H1 (cell line): ENCODE measurements at regions of chr11 and their contacts with region 1.

Region 1: DNA sequence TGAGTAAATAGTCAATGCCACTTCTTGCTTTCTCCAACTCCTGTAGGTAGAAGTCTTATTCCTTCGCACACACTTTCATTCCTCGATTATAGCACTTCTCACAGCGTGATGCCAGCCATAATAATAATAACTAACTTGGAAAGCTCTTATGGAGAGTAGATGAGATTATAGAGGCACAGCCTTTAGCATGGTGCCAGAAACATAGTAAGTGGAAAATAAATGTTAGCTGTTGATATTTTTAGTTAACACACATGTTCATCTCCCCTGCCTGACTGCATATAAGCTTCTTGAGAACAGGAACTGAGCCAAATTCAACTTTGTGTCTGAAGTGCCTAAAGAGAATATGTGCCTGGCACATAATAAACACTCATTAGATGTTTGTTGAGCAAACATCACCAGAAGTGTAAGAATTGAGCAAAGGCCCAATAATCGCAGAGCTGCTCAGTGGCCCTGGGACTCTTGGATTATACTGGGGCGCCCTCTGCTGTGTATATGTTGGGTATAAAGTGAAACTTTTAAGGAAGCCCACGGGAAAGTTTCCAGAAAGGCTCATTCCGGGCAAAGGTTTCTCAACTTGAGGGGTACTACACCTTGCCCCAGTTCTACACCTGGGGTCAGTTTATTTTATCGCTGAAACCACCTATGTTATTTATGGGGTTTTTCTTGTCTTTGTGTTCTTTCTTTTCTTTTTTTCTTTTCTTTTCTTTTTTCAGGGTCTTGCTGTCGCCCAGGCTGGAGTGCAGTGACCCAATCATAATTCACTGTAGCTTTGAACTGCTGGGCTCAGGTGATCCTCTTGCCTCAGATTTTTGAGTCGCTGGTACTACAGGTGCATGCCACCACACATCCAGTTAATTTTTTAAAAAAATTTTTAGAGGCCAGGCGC is 22.3 kb downstream of the SLN start:
- DNase-seq: peak in 1 of 2 experiments; percentile 78
- H3K4me3 ChIP-seq: no peak overlapping the region
- H3K27ac ChIP-seq: no peak overlapping the region
- H3K4me1 ChIP-seq: no peaks in the 10 kb centered on the region
- H3K27me3 ChIP-seq: no peaks in the 10 kb centered on the region
- CTCF ChIP-seq: peak; percentile 17 to 94 (median 67)
- EP300 ChIP-seq: no peak
- POLR2A ChIP-seq: no peak
- RAD21 ChIP-seq: peak; percentile 96 to 99

Region 2: GRCh38 chr11:107565219-107565937 is 124.2 kb before region 1 on chr11 and contains the start of gene ALKBH8:
- CTCF ChIA-PET with region 1: interaction called, 398 read pairs
- POLR2A ChIA-PET with region 1: interaction called, 4 read pairs
- DNase-seq: peak in 1 of 2 experiments; percentile 81
- H3K4me3 ChIP-seq: peak within 1 kb of the TSS; percentile 88 to 99 (median 94)
- H3K27ac ChIP-seq: peak within 1 kb of the TSS; percentile 82
- H3K4me1 ChIP-seq: peaks cover 0 to 6% (median 1%) of the 10 kb centered on the region in 4 experiments; a peak in 3 of 7 replicates
- H3K27me3 ChIP-seq: no peaks in the 10 kb centered on the region
- CTCF ChIP-seq: no peak
- EP300 ChIP-seq: no peak
- POLR2A ChIP-seq: peak in 1 of 2 experiments; percentile 84; a peak in 2 of 3 replicates
- RAD21 ChIP-seq: no peak
- total RNA-seq, gene ALKBH8: 11.9 and 13.0 TPM in 2 replicates

Region 3: GRCh38 chr11:107606141-107606540 is 83.4 kb before region 1 on chr11:
- CTCF ChIA-PET with region 1: interaction called, 57 read pairs
- POLR2A ChIA-PET with region 1: no interaction called
- DNase-seq: no peak
- H3K4me3 ChIP-seq: no peak overlapping the region
- H3K27ac ChIP-seq: no peak overlapping the region
- H3K4me1 ChIP-seq: peaks cover 0 to 3% (median 0%) of the 10 kb centered on the region in 4 experiments; a peak in 2 of 7 replicates
- H3K27me3 ChIP-seq: peaks cover 0 to 5% (median under 1%) of the 10 kb centered on the region in 4 experiments; a peak in 2 of 7 replicates
- CTCF ChIP-seq: peak; percentile 29 to 55 (median 42); a peak in 3 of 4 replicates
- EP300 ChIP-seq: no peak
- POLR2A ChIP-seq: no peak
- RAD21 ChIP-seq: peak; percentile 5 to 11; a peak in 1 of 4 replicates

Region 4: DNA sequence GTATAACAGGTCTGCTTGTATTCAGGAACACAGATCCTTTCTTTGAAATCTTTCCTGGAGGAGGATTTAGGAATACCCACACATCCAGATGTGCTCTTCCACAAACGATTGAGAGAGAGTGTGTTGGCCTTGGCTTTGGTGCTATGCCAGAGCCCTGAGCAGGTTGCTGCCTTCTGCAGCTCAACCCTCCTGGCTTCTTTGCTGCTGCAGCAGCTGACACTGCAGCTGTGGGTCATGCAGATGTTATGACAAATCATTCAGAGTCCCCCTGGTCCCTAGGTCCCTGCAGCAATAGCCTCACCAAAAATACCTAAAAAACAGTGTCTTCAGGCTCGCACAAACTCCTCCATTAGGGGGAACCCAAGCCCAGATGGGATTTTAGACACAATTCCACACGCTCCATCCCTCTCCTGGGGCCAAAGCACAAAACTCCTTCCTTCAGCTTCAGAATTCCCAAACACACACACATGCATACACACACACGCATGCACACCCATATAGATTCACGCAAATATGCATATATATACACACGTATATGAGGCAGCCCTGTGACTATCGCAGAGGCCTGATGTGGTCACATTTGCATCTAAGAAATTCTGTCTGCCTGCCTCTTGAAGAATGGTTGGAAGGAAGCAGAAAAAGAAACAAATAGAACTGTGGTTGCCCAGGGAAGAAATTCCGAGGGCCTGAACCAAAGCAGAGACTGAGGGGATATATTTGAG is 13.1 kb before region 1 on chr11:
- CTCF ChIA-PET with region 1: interaction called, 149 read pairs
- POLR2A ChIA-PET with region 1: no interaction called
- DNase-seq: no peak
- H3K4me3 ChIP-seq: no peak overlapping the region
- H3K27ac ChIP-seq: no peak overlapping the region
- H3K4me1 ChIP-seq: no peaks in the 10 kb centered on the region
- H3K27me3 ChIP-seq: no peaks in the 10 kb centered on the region
- CTCF ChIP-seq: no peak
- EP300 ChIP-seq: no peak
- POLR2A ChIP-seq: no peak
- RAD21 ChIP-seq: no peak

Region 5: GRCh38 chr11:107713009-107713408 is 23.4 kb after region 1 on chr11:
- CTCF ChIA-PET with region 1: no interaction called
- POLR2A ChIA-PET with region 1: no interaction called
- DNase-seq: no peak
- H3K4me3 ChIP-seq: no peak overlapping the region
- H3K27ac ChIP-seq: no peak overlapping the region
- H3K4me1 ChIP-seq: peaks cover 0 to 3% (median 0%) of the 10 kb centered on the region in 4 experiments; a peak in 1 of 7 replicates
- H3K27me3 ChIP-seq: no peaks in the 10 kb centered on the region
- CTCF ChIP-seq: no peak
- EP300 ChIP-seq: no peak
- POLR2A ChIP-seq: no peak
- RAD21 ChIP-seq: no peak

Region 6: DNA sequence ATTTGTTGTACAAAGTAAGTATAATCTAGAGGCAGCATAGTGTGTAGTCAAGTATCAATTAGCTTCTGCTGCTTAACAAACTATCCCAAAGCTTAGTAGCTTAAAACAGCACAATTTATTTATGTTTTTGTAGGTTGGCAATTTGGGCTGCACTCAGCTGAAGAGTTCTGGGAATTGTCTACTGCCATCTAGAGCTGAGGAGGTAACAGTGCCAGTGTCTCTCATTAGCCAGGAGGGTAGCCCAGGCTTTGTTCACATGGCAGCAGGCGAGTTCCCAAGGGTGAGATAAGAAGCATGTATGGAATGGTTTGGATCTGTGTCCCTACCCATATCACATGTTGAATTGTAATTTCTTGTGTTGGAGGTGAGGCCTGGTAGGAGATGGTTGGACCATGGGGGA is 68.1 kb after region 1 on chr11:
- CTCF ChIA-PET with region 1: interaction called, 11 read pairs
- POLR2A ChIA-PET with region 1: no interaction called
- DNase-seq: no peak
- H3K4me3 ChIP-seq: no peak overlapping the region
- H3K27ac ChIP-seq: no peak overlapping the region
- H3K4me1 ChIP-seq: no peaks in the 10 kb centered on the region
- H3K27me3 ChIP-seq: no peaks in the 10 kb centered on the region
- CTCF ChIP-seq: peak; percentile 25 to 63 (median 37)
- EP300 ChIP-seq: no peak
- POLR2A ChIP-seq: no peak
- RAD21 ChIP-seq: peak; percentile 27 to 51; a peak in 3 of 4 replicates